ENCODE measurements at regions of chr14 and their contacts with region 1.

Region 1: GRCh38 chr14:31360919-31361662 is 59.3 kb downstream of the HEATR5A start:
- DNase-seq: peak; percentile 22
- H3K4me3 ChIP-seq: no peak overlapping the region
- H3K27ac ChIP-seq: peak overlapping the region; percentile 68
- H3K4me1 ChIP-seq: peaks cover 28% of the 10 kb centered on the region
- H3K27me3 ChIP-seq: no peaks in the 10 kb centered on the region
- CTCF ChIP-seq: no peak
- POLR2A ChIP-seq: no peak

Region 2: DNA sequence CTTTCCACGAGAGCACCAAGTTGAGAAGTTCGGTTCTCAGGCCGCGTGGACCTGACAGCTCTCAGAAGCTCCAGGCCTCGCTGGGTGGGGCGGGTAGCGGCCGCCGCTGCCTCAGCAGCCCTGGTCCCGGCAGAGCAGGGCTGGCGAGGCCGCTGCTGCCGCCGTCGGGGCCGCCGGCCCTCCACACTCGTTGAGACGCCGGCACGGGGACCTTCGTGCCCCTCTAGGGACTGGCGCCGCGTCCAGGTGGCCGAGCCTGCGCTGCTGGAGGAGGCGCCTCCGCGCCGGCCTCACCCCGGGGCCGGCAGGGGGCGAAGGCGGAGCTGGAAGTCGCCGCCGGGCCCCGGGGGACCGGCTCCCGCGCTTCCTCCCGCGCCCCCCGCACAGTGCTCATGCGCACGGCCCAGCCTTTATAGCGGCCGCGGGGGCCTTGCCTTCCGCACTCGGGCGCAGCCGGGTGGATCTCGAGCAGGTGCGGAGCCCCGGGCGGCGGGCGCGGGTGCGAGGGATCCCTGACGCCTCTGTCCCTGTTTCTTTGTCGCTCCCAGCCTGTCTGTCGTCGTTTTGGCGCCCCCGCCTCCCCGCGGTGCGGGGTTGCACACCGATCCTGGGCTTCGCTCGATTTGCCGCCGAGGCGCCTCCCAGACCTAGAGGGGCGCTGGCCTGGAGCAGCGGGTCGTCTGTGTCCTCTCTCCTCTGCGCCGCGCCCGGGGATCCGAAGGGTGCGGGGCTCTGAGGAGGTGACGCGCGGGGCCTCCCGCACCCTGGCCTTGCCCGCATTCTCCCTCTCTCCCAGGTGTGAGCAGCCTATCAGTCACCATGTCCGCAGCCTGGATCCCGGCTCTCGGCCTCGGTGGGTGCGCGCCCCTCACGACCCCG is 486.7 kb before region 1 on chr14 and contains the start of gene COCH:
- CTCF ChIA-PET with region 1: no interaction called
- POLR2A ChIA-PET with region 1: no interaction called
- dilution Hi-C with region 1: no loop called
- intact Hi-C with region 1: loop called (anchors 5 kb)
- DNase-seq: no peak
- H3K4me3 ChIP-seq: peak within 1 kb of the TSS; percentile 42 to 50 (median 49)
- H3K27ac ChIP-seq: no peak within 1 kb of the TSS
- H3K4me1 ChIP-seq: peaks cover 12% of the 10 kb centered on the region
- H3K27me3 ChIP-seq: peaks cover 47 to 64% of the 10 kb centered on the region in 2 experiments
- CTCF ChIP-seq: peak; percentile 22 to 32
- POLR2A ChIP-seq: no peak
- total RNA-seq, gene COCH: 0.88 and 1.9 TPM in 2 replicates

Region 3: GRCh38 chr14:31142455-31143087 is 218.5 kb before region 1 on chr14:
- CTCF ChIA-PET with region 1: no interaction called
- POLR2A ChIA-PET with region 1: no interaction called
- dilution Hi-C with region 1: no loop called
- intact Hi-C with region 1: loop called (anchors 5 kb)
- DNase-seq: no peak
- H3K4me3 ChIP-seq: no peak overlapping the region
- H3K27ac ChIP-seq: no peak overlapping the region
- H3K4me1 ChIP-seq: no peaks in the 10 kb centered on the region
- H3K27me3 ChIP-seq: no peaks in the 10 kb centered on the region
- CTCF ChIP-seq: no peak
- POLR2A ChIP-seq: no peak

Region 4: DNA sequence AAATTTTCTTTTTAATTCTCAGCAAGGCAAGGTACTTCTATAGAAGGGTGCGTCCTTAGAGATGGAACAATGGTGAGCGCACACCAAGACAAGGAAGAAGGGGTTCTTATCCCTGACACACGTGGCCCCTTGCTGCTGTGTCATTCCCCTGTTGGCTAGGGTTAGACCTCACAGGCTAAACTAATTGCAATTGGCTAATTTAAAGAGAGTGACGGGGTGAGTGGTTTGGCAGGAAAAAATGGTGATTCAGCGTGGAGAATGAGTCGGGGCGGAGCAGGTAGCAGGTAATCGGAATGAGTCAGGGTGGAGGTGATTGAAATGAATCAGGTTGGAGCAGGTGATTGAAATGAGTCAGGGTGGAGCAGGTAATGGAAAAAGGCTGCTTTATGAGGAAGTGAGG is 117.2 kb before region 1 on chr14:
- CTCF ChIA-PET with region 1: no interaction called
- POLR2A ChIA-PET with region 1: no interaction called
- dilution Hi-C with region 1: no loop called
- intact Hi-C with region 1: no loop called
- DNase-seq: no peak
- H3K4me3 ChIP-seq: no peak overlapping the region
- H3K27ac ChIP-seq: no peak overlapping the region
- H3K4me1 ChIP-seq: no peaks in the 10 kb centered on the region
- H3K27me3 ChIP-seq: no peaks in the 10 kb centered on the region
- CTCF ChIP-seq: no peak
- POLR2A ChIP-seq: no peak

Region 5: GRCh38 chr14:31270196-31270772 is 90.8 kb before region 1 on chr14:
- CTCF ChIA-PET with region 1: no interaction called
- POLR2A ChIA-PET with region 1: no interaction called
- dilution Hi-C with region 1: no loop called
- intact Hi-C with region 1: loop called (anchors 1 kb)
- DNase-seq: no peak
- H3K4me3 ChIP-seq: no peak overlapping the region
- H3K27ac ChIP-seq: peak overlapping the region; percentile 21
- H3K4me1 ChIP-seq: peaks cover 9% of the 10 kb centered on the region
- H3K27me3 ChIP-seq: no peaks in the 10 kb centered on the region
- CTCF ChIP-seq: peak in 1 of 2 donors; percentile 24
- POLR2A ChIP-seq: no peak

Region 6: GRCh38 chr14:31346097-31346496 is 15.0 kb before region 1 on chr14:
- CTCF ChIA-PET with region 1: no interaction called
- POLR2A ChIA-PET with region 1: no interaction called
- dilution Hi-C with region 1: no loop called
- intact Hi-C with region 1: no loop called
- DNase-seq: no peak
- H3K4me3 ChIP-seq: no peak overlapping the region
- H3K27ac ChIP-seq: no peak overlapping the region
- H3K4me1 ChIP-seq: no peaks in the 10 kb centered on the region
- H3K27me3 ChIP-seq: no peaks in the 10 kb centered on the region
- CTCF ChIP-seq: no peak
- POLR2A ChIP-seq: no peak

Region 7: DNA sequence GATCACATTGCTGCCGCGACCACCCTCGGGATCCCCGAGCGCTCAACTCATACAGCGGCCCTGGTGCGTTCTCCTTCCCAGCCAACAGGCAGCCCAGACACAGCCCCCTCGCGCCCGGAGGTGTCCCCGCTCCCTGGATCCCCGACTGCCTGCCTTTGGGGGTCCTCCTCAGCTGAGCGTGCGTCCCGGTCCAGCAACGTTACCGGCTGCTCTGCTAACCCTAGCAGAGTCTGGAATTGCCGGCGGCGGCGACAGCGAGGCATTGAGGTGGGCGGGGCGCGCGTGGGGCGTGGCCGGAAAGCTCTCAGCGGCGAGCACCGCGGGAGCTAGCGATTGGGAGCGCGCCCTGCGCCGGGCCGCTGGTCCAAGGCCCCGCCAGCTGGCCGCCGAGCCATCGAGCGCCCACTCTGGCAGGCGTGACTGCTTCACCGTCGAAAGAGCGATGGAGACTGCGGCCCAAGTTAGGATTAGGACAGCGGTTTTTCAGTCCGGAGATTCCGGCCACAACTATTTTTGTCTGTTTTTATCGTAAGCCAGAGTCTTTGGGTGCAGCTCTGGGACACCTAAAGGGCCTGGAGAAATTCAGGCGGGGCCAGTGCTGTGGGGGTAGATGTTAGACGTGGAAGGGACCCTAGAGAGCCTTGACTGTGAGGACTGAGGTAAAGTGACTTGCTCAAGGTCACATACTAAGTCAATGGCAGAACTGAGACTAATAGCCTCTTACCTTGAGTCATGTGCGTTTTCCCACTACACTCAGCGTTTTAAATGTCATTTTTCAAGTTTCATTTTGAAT is 59.4 kb after region 1 on chr14 and contains the start of gene HEATR5A:
- CTCF ChIA-PET with region 1: no interaction called
- POLR2A ChIA-PET with region 1: interaction called, 4 read pairs
- dilution Hi-C with region 1: no loop called
- intact Hi-C with region 1: loop called (anchors 2 kb)
- DNase-seq: peak; percentile 96
- H3K4me3 ChIP-seq: peak within 1 kb of the TSS; percentile 83 to 86 (median 83)
- H3K27ac ChIP-seq: peak within 1 kb of the TSS; percentile 60
- H3K4me1 ChIP-seq: peaks cover 13% of the 10 kb centered on the region
- H3K27me3 ChIP-seq: no peaks in the 10 kb centered on the region
- CTCF ChIP-seq: peak in 1 of 2 donors; percentile 27
- POLR2A ChIP-seq: peak; percentile 99
- total RNA-seq, gene HEATR5A: 37.0 and 45.3 TPM in 2 replicates